ENCODE measurements at regions of chr7 and their contacts with region 1.

Region 1: GRCh38 chr7:50092579-50093491 is at the start of gene ZPBP:
- DNase-seq: peak in 7 of 9 experiments; percentile 42 to 79 (median 54)
- ATAC-seq: peak; percentile 78
- H3K4me3 ChIP-seq: peak within 1 kb of the TSS; percentile 40 to 63
- H3K4me3 Mint-ChIP-seq: peak within 1 kb of the TSS; percentile 92
- H3K27ac ChIP-seq: peak within 1 kb of the TSS; percentile 25 to 51
- H3K27ac Mint-ChIP-seq: peak within 1 kb of the TSS; percentile 86
- H3K4me1 ChIP-seq: peaks cover 4% of the 10 kb centered on the region
- H3K4me1 Mint-ChIP-seq: peaks cover 16% of the 10 kb centered on the region
- H3K27me3 ChIP-seq: no peaks in the 10 kb centered on the region
- H3K27me3 Mint-ChIP-seq: no peaks in the 10 kb centered on the region
- CTCF ChIP-seq: peak; percentile 98
- total RNA-seq, gene ZPBP: not detected

Region 2: GRCh38 chr7:50068961-50069551 is 23.8 kb before region 1 on chr7:
- CTCF ChIA-PET with region 1: interaction called, 11 read pairs
- POLR2A ChIA-PET with region 1: interaction called, 7 read pairs
- intact Hi-C with region 1: no loop called
- DNase-seq: peak in 4 of 9 experiments; percentile 29 to 69 (median 52)
- ATAC-seq: peak; percentile 70
- H3K4me3 ChIP-seq: peak overlapping the region; percentile 41 to 55
- H3K4me3 Mint-ChIP-seq: peak overlapping the region; percentile 94
- H3K27ac ChIP-seq: peak overlapping the region; percentile 43 to 72
- H3K27ac Mint-ChIP-seq: peak overlapping the region; percentile 95
- H3K4me1 ChIP-seq: peaks cover 21% of the 10 kb centered on the region
- H3K4me1 Mint-ChIP-seq: peaks cover 23% of the 10 kb centered on the region
- H3K27me3 ChIP-seq: no peaks in the 10 kb centered on the region
- H3K27me3 Mint-ChIP-seq: peaks cover 5% of the 10 kb centered on the region
- CTCF ChIP-seq: no peak

Region 3: GRCh38 chr7:50142425-50143017 is 49.7 kb after region 1 on chr7:
- CTCF ChIA-PET with region 1: no interaction called
- POLR2A ChIA-PET with region 1: no interaction called
- intact Hi-C with region 1: loop called in 1 of 2 experiments (anchors 5 kb)
- DNase-seq: peak in 4 of 9 experiments; percentile 38 to 78 (median 59)
- ATAC-seq: peak; percentile 85
- H3K4me3 ChIP-seq: no peak overlapping the region
- H3K4me3 Mint-ChIP-seq: peak overlapping the region; percentile 57
- H3K27ac ChIP-seq: no peak overlapping the region
- H3K27ac Mint-ChIP-seq: peak overlapping the region; percentile 84
- H3K4me1 ChIP-seq: peaks cover 5% of the 10 kb centered on the region
- H3K4me1 Mint-ChIP-seq: peaks cover 15% of the 10 kb centered on the region
- H3K27me3 ChIP-seq: no peaks in the 10 kb centered on the region
- H3K27me3 Mint-ChIP-seq: no peaks in the 10 kb centered on the region
- CTCF ChIP-seq: peak; percentile 91

Region 4: DNA sequence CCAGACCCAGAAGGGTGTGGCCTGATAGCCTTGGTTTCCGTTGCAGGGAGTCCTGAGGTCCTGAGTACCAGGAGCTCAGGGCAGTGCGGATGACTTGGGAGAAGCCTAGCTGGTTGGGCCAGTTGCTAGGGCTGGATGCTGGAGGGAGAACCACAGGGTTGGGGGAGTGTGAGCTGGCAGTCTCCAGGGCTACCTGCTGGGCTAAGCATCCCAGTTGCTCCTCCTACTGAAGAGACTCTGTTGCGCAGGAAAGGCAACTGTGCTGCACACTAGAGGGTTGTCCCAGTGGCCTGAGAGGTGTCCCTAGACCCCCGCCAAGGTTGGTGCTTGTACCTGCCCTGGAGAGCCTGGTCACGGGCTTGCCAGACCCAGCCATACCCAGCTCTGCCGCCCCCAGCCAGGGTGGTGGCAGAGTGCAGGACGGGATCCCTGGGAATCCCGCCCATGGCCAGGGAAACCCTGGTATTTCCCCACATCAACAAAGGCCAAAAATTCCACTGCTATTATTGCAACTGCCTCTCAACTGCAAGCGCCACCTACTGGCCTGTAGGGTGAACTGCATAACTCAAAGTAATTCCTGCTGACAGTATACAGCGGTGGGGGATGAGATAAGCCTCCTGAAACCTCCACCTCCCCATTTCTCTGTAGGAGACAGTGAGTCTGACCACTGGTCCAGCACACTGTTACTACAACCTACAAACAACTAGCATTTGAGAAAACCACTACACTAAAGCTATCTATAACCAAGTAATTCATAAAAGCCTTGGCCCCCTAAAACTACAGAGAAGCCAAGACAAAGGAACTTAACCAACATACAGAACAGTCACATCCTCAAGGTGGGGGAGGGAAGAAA is 540.0 kb after region 1 on chr7:
- CTCF ChIA-PET with region 1: interaction called, 17 read pairs
- POLR2A ChIA-PET with region 1: no interaction called
- intact Hi-C with region 1: loop called (anchors 1 kb)
- DNase-seq: peak; percentile 31 to 77 (median 58)
- ATAC-seq: peak; percentile 83
- H3K4me3 ChIP-seq: no peak overlapping the region
- H3K4me3 Mint-ChIP-seq: no peak overlapping the region
- H3K27ac ChIP-seq: no peak overlapping the region
- H3K27ac Mint-ChIP-seq: no peak overlapping the region
- H3K4me1 ChIP-seq: no peaks in the 10 kb centered on the region
- H3K4me1 Mint-ChIP-seq: no peaks in the 10 kb centered on the region
- H3K27me3 ChIP-seq: no peaks in the 10 kb centered on the region
- H3K27me3 Mint-ChIP-seq: peaks cover 13% of the 10 kb centered on the region
- CTCF ChIP-seq: peak; percentile 92

Region 5: GRCh38 chr7:51067757-51068156 is 974.9 kb after region 1 on chr7:
- CTCF ChIA-PET with region 1: interaction called, 4 read pairs
- POLR2A ChIA-PET with region 1: no interaction called
- intact Hi-C with region 1: loop called in 1 of 2 experiments (anchors 5 kb)
- DNase-seq: peak in 7 of 9 experiments; percentile 9 to 53 (median 43)
- ATAC-seq: no peak
- H3K4me3 ChIP-seq: no peak overlapping the region
- H3K4me3 Mint-ChIP-seq: no peak overlapping the region
- H3K27ac ChIP-seq: no peak overlapping the region
- H3K27ac Mint-ChIP-seq: no peak overlapping the region
- H3K4me1 ChIP-seq: no peaks in the 10 kb centered on the region
- H3K4me1 Mint-ChIP-seq: no peaks in the 10 kb centered on the region
- H3K27me3 ChIP-seq: no peaks in the 10 kb centered on the region
- H3K27me3 Mint-ChIP-seq: no peaks in the 10 kb centered on the region
- CTCF ChIP-seq: peak; percentile 54

Region 6: DNA sequence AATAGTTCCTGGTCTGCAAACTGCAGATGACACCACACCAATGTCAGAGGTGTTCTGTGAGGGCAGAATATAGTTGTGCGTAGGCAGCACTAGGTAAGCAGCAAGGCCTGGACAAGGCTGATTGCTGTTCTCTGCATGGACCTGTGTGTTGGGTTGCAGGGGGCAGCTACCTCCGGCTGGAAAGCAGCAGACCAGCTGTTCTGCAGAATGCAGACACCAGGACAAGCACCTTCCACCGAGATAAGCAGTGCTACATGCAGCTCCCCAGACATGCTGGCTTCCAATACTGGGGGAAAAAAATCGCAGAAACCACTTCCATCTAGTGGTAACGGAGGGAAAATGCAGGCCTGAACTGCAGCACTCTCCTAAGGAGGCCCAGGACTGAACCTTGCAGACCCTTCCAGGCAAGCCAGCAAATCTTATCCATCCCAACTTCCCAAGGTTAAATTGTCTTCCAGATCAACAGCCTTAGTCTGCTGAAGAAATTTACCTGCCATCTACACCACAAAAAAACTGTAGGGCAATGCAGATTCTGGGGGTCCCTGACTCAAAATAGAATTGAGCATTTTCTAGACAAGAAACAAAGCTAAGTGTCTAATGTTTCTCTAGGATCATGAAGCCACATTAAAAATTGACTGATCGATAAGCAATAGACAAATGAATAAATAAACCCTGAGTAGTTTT is 1274.2 kb after region 1 on chr7:
- CTCF ChIA-PET with region 1: no interaction called
- POLR2A ChIA-PET with region 1: no interaction called
- intact Hi-C with region 1: loop called (anchors 2 to 5 kb)
- DNase-seq: peak in 1 of 9 experiments; percentile 11
- ATAC-seq: no peak
- H3K4me3 ChIP-seq: no peak overlapping the region
- H3K4me3 Mint-ChIP-seq: no peak overlapping the region
- H3K27ac ChIP-seq: no peak overlapping the region
- H3K27ac Mint-ChIP-seq: no peak overlapping the region
- H3K4me1 ChIP-seq: no peaks in the 10 kb centered on the region
- H3K4me1 Mint-ChIP-seq: no peaks in the 10 kb centered on the region
- H3K27me3 ChIP-seq: no peaks in the 10 kb centered on the region
- H3K27me3 Mint-ChIP-seq: no peaks in the 10 kb centered on the region
- CTCF ChIP-seq: no peak

Measured in CD8-positive, alpha-beta T cell (primary cell).